ENCODE measurements at regions of chr12 and their contacts with region 1.

Region 1: GRCh38 chr12:106136263-106136662 is 2.5 kb downstream of the NUAK1 start:
- DNase-seq: peak; percentile 89 to 95 (median 93)
- H3K4me3 ChIP-seq: peak overlapping the region; percentile 44 to 72 (median 54)
- H3K27ac ChIP-seq: peak overlapping the region; percentile 48 to 82
- H3K4me1 ChIP-seq: peaks cover 0 to 34% (median 29%) of the 10 kb centered on the region in 3 donors
- H3K27me3 ChIP-seq: no peaks in the 10 kb centered on the region
- CTCF ChIP-seq: peak; percentile 86

Region 2: DNA sequence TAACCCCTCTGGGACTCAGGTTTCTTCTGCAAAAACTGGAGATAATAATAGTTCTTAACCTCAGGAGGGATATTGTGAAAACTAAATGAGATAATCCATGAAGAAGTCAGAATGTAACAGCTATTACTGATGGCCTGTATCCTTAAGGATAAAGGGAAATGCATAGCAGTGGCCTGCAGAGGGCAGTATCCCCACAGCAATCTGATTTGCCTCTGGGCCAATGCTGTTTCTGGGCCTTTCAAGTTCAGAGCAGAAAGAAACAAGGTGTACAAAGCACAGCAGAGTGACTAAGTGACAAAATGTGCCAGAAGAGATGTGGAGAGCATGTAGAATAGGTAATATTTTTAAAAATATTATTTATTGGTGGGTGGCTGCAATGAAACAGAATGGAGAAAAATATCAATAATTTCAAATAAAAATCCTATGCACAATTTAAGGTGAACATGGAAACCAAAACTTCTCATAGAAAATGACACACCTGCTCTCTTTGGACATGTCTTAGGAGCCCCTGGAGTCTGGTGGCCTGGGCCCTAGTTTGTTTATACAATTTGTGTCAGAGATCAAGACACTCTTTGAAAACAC is 715.5 kb before region 1 on chr12:
- intact Hi-C with region 1: loop called (anchors 5 kb)
- DNase-seq: peak in 4 of 5 donors; percentile 82 to 90 (median 85)
- H3K4me3 ChIP-seq: no peak overlapping the region
- H3K27ac ChIP-seq: no peak overlapping the region
- H3K4me1 ChIP-seq: no peaks in the 10 kb centered on the region
- H3K27me3 ChIP-seq: no peaks in the 10 kb centered on the region
- CTCF ChIP-seq: peak; percentile 95

Region 3: DNA sequence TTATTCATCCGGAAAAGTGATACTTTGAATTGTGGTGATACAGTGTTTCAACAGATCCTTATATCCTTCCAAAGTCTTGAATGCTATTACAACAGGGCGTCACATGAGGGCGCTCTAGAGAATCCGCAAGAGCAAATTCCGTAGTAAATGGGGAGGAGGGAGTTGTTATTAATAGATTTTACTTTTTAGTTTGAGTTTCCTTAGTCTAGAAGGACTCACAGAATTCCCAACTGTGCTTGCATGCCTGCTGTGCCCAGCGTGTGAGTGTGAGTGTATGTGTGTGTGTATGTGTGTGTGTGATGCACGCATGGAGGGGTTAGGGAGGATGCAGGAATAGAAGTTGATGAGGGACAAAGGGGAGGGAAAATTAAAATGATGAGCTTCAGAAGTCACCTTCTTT is 430.5 kb before region 1 on chr12:
- intact Hi-C with region 1: loop called (anchors 10 kb)
- DNase-seq: peak in 4 of 5 donors; percentile 56 to 89 (median 68)
- H3K4me3 ChIP-seq: no peak overlapping the region
- H3K27ac ChIP-seq: peak overlapping the region; percentile 10 to 38
- H3K4me1 ChIP-seq: peaks cover 3 to 6% (median 4%) of the 10 kb centered on the region in 3 donors
- H3K27me3 ChIP-seq: no peaks in the 10 kb centered on the region
- CTCF ChIP-seq: peak; percentile 67

Region 4: GRCh38 chr12:106074706-106075392 is 61.4 kb before region 1 on chr12:
- intact Hi-C with region 1: no loop called
- DNase-seq: peak in 4 of 5 donors; percentile 73 to 94 (median 89)
- H3K4me3 ChIP-seq: no peak overlapping the region
- H3K27ac ChIP-seq: no peak overlapping the region
- H3K4me1 ChIP-seq: peaks cover 4 to 17% (median 4%) of the 10 kb centered on the region in 3 donors
- H3K27me3 ChIP-seq: no peaks in the 10 kb centered on the region
- CTCF ChIP-seq: no peak